Heart left ventricle (tissue), 16 donors: ENCODE measurements at regions of chr1 and their contacts with region 1.

Region 1: GRCh38 chr1:84442256-84442655 is 36.8 kb upstream of the RPF1 start:
- DNase-seq: no peak
- ATAC-seq: peak; percentile 51 to 78 (median 74)
- H3K4me3 ChIP-seq: no peak overlapping the region
- H3K27ac ChIP-seq: peak overlapping the region in 1 of 12 donors; percentile 44
- H3K4me1 ChIP-seq: peaks cover 0 to 22% (median 0%) of the 10 kb centered on the region in 12 donors
- H3K27me3 ChIP-seq: peaks cover 0 to 12% (median 0%) of the 10 kb centered on the region in 9 donors
- CTCF ChIP-seq: peak; percentile 7 to 61 (median 46)
- POLR2A ChIP-seq: no peak

Region 2: GRCh38 chr1:84541679-84542078 is 99.4 kb after region 1 on chr1:
- intact Hi-C with region 1: loop called in 1 of 10 experiments (anchors 10 kb)
- DNase-seq: no peak
- ATAC-seq: no peak
- H3K4me3 ChIP-seq: no peak overlapping the region
- H3K27ac ChIP-seq: no peak overlapping the region
- H3K4me1 ChIP-seq: no peaks in the 10 kb centered on the region
- H3K27me3 ChIP-seq: no peaks in the 10 kb centered on the region
- CTCF ChIP-seq: peak in 6 of 12 donors; percentile 14 to 37 (median 28)
- POLR2A ChIP-seq: no peak

Region 3: GRCh38 chr1:84632673-84633434 is 190.6 kb after region 1 on chr1:
- intact Hi-C with region 1: no loop called
- DNase-seq: no peak
- ATAC-seq: peak in 3 of 4 donors; percentile 42 to 80 (median 44)
- H3K4me3 ChIP-seq: no peak overlapping the region
- H3K27ac ChIP-seq: no peak overlapping the region
- H3K4me1 ChIP-seq: peaks cover 0 to 9% (median 0%) of the 10 kb centered on the region in 12 donors
- H3K27me3 ChIP-seq: no peaks in the 10 kb centered on the region
- CTCF ChIP-seq: no peak
- POLR2A ChIP-seq: no peak

Region 4: GRCh38 chr1:84772428-84772943 is 330.2 kb after region 1 on chr1:
- intact Hi-C with region 1: loop called in 8 of 10 experiments (anchors 2 to 10 kb)
- DNase-seq: peak; percentile 73 to 79 (median 76)
- ATAC-seq: peak; percentile 78 to 91 (median 88)
- H3K4me3 ChIP-seq: no peak overlapping the region
- H3K27ac ChIP-seq: no peak overlapping the region
- H3K4me1 ChIP-seq: peaks cover 0 to 3% (median 0%) of the 10 kb centered on the region in 12 donors
- H3K27me3 ChIP-seq: peaks cover 0 to 8% (median 0%) of the 10 kb centered on the region in 9 donors
- CTCF ChIP-seq: peak; percentile 82 to 96 (median 94)
- POLR2A ChIP-seq: no peak